CD14-positive monocyte (primary cell): ENCODE measurements at regions of chr19 and their contacts with region 1.

Region 1: GRCh38 chr19:42396381-42397262 is 6.5 kb upstream of the CNFN start:
- DNase-seq: peak; percentile 98 to 99 (median 98)
- H3K4me3 ChIP-seq: peak overlapping the region; percentile 53 to 83 (median 76)
- H3K4me3 Mint-ChIP-seq: peak overlapping the region; percentile 88 to 99
- H3K27ac ChIP-seq: peak overlapping the region; percentile 82 to 89
- H3K27ac Mint-ChIP-seq: peak overlapping the region; percentile 94 to 99 (median 97)
- H3K4me1 ChIP-seq: peaks cover 29 to 33% of the 10 kb centered on the region in 2 donors
- H3K4me1 Mint-ChIP-seq: peaks cover 32% of the 10 kb centered on the region
- H3K27me3 ChIP-seq: no peaks in the 10 kb centered on the region
- H3K27me3 Mint-ChIP-seq: peaks cover 11 to 19% (median 18%) of the 10 kb centered on the region in 3 donors
- CTCF ChIP-seq: no peak

Region 2: DNA sequence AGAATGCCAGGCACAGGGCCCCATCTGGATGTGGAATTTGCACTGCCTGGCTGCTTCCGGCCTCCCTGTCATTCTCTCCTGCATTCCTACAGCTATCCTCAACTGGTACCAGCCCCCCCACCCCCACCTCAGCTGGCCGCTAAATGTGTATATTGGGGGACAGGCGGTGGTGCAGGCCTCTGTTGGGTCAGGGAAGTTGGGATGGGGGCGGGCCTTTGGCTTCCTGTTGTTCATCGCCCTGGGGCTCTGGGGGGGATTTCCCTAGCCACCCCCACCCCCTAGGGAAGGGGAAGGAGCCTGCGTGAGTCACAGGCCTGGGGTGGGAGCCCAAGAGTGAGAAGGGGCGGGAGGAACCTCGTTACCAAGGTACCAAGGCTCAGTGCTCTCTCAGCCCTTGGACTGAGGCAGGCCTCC is 275.0 kb before region 1 on chr19:
- intact Hi-C with region 1: loop called in 1 of 2 experiments (anchors 10 kb)
- DNase-seq: peak; percentile 95 to 97 (median 95)
- H3K4me3 ChIP-seq: peak overlapping the region; percentile 33 to 79 (median 47)
- H3K4me3 Mint-ChIP-seq: peak overlapping the region; percentile 78 to 88
- H3K27ac ChIP-seq: peak overlapping the region; percentile 98 to 99
- H3K27ac Mint-ChIP-seq: peak overlapping the region; percentile 94 to 99 (median 97)
- H3K4me1 ChIP-seq: peaks cover 67 to 70% of the 10 kb centered on the region in 2 donors
- H3K4me1 Mint-ChIP-seq: peaks cover 74% of the 10 kb centered on the region
- H3K27me3 ChIP-seq: no peaks in the 10 kb centered on the region
- H3K27me3 Mint-ChIP-seq: peaks cover 0 to 5% (median 2%) of the 10 kb centered on the region in 3 donors
- CTCF ChIP-seq: no peak

Region 3: GRCh38 chr19:42325273-42325895 is 71.2 kb before region 1 on chr19 and contains the start of gene MEGF8:
- intact Hi-C with region 1: loop called in 1 of 2 experiments (anchors 2 kb)
- DNase-seq: peak; percentile 96 to 98 (median 98)
- H3K4me3 ChIP-seq: peak within 1 kb of the TSS; percentile 55 to 96 (median 85)
- H3K4me3 Mint-ChIP-seq: peak within 1 kb of the TSS; percentile 84 to 93
- H3K27ac ChIP-seq: peak within 1 kb of the TSS; percentile 5 to 65
- H3K27ac Mint-ChIP-seq: peak within 1 kb of the TSS; percentile 21 to 74 (median 50)
- H3K4me1 ChIP-seq: peaks cover 14 to 27% of the 10 kb centered on the region in 2 donors
- H3K4me1 Mint-ChIP-seq: peaks cover 31% of the 10 kb centered on the region
- H3K27me3 ChIP-seq: peaks cover 24 to 32% of the 10 kb centered on the region in 2 donors
- H3K27me3 Mint-ChIP-seq: peaks cover 38 to 49% (median 44%) of the 10 kb centered on the region in 3 donors
- CTCF ChIP-seq: peak; percentile 80
- polyA plus RNA-seq, gene MEGF8: 0.15 to 2.7 (median 0.27) TPM